Sciatic nerve (tissue), 2 donors: ENCODE measurements at regions of chr15 and their contacts with region 1.

Region 1: GRCh38 chr15:85380217-85380811 is at the start of gene AKAP13:
- DNase-seq: peak; percentile 96
- ATAC-seq: peak; percentile 98
- total RNA-seq, gene AKAP13: 238 TPM

Region 2: GRCh38 chr15:84797212-84797611 is 583.1 kb before region 1 on chr15:
- intact Hi-C with region 1: loop called (anchors 5 kb)
- DNase-seq: no peak
- ATAC-seq: no peak